ENCODE measurements at regions of chr1 and their contacts with region 1.

Region 1: DNA sequence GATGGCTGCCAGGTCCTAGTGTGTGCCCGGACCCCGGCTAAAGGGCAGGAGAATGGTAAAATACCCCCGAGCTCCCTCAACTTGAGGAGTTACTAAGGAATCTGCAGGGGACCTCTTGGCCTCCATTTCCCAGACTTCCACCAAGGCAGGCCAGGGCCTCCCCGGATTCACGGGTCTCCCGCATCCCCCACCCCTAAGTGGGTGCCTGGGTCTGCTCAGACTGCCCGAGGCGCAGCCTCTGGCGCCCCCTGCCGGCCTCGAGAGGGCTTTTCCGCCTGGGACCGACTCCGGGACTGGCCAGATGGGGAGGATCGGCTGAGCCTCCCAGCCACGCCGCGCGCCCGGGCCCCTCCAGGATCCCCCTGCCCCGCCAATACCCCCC is 1.7 kb downstream of the PLEKHG5 start:
- DNase-seq: peak; percentile 91 to 97 (median 96)
- ATAC-seq: peak; percentile 91
- H3K4me3 ChIP-seq: peak overlapping the region; percentile 40
- H3K27ac ChIP-seq: no peak overlapping the region
- H3K4me1 ChIP-seq: peaks cover 4 to 43% of the 10 kb centered on the region in 2 experiments; a peak in 2 of 5 replicates
- H3K27me3 ChIP-seq: peaks cover 18 to 70% of the 10 kb centered on the region in 2 experiments; a peak in 4 of 5 replicates
- CTCF ChIP-seq: peak; percentile 95 to 97 (median 97)
- EP300 ChIP-seq: no peak
- POLR2A ChIP-seq: no peak
- RAD21 ChIP-seq: peak; percentile 27 to 73; a peak in 3 of 4 replicates

Region 2: DNA sequence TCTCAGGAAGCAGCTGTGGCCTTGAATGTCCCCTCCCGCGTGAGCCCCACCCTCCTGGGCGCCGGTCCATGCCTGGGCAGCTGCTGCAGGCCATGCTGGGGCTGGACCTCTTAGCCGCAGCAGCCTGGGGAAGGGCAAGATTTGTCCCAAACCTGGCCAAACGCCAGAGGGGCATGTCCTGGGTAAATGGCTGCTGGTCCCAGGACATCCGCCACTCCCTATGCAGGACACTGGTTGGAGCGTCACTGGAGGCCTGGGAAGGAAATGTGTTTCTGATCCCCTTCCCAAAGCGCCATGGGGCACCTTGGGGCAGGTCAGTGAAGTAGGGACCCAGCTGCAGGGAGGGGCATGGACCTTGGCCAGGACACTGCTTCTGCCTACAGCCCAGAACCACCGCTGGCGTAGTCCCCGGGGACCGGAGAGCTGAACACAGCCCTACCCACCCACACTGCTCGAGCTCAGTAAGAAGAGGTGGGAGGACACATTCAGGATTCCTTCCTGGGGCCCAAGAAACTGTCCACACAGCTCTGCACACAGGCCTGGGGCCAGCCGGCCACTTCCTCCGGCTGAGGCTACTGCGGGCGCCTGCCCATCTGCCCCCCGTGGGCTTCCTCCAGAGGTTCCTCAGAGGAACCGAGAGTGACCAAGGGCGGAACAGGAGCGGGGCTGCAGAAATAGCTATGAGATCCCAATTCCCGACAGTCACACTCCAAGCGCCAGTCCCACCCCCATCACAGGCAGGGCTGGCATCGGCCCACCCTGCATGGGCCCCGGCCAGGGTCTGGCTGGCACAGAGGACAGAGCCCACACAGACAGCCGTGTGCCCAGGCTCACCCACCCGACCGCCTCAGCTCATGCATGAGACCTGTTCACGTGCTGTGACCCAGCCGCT is 12.5 kb after region 1 on chr1:
- CTCF ChIA-PET with region 1: no interaction called
- POLR2A ChIA-PET with region 1: interaction called, 8 read pairs
- in situ Hi-C with region 1: no loop called
- intact Hi-C with region 1: loop called (anchors 2 kb)
- DNase-seq: no peak
- ATAC-seq: peak; percentile 2; the same call in 1 of the 3 replicates
- H3K4me3 ChIP-seq: no peak overlapping the region
- H3K27ac ChIP-seq: no peak overlapping the region
- H3K4me1 ChIP-seq: peaks cover 0 to 61% of the 10 kb centered on the region in 2 experiments; a peak in 2 of 5 replicates
- H3K27me3 ChIP-seq: peaks cover 74 to 90% of the 10 kb centered on the region in 2 experiments
- CTCF ChIP-seq: no peak
- EP300 ChIP-seq: no peak
- POLR2A ChIP-seq: no peak
- RAD21 ChIP-seq: no peak

Region 3: DNA sequence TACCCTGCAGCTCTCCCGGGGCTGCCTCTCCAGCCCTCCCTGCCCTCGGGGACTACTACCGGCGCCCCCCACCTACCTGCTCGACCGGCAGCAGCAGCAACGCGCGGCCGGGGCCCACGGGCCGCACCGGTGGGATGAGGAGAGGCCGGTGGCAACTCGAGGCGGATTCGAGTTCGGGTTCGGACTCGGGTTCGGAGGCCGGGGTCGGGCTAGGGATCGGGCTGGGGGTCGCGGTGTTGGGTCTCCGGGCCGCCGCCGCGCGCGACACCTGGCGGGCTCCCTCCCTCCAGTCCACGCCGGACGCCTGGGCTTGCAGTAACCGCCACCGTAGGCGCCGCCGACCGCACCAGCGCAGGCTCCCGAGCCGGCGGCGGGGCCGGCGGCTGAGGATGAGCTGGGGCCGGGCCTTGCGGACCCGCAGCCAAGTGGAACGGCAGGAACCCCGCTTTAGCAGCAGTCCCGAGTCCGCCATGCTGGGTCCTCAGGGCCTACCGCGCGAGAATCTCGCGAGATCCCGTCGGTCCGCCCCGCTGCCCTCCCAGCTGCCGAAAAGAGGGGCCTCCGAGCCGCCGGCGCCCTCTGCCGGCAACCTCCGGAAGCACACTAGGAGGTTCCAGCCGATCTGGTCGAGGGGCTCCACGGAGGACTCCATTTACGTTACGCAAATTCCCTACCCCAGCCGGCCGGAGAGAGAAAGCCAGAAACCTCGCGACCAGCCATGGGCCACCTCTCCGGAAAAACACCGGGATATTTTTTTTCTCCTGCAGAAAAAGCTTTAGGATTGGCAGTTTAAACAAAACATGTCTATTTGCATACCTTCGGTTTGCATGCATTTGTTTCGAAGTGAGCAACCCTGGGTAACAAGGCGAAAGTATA is 64.5 kb after region 1 on chr1 and contains the start of gene NOL9:
- CTCF ChIA-PET with region 1: interaction called, 4 read pairs
- POLR2A ChIA-PET with region 1: no interaction called
- in situ Hi-C with region 1: no loop called
- intact Hi-C with region 1: loop called (anchors 2 kb)
- DNase-seq: peak; percentile 98 to 99 (median 98)
- ATAC-seq: peak; percentile 98
- H3K4me3 ChIP-seq: peak within 1 kb of the TSS; percentile 99
- H3K27ac ChIP-seq: peak within 1 kb of the TSS; percentile 85
- H3K4me1 ChIP-seq: peaks cover 14 to 24% of the 10 kb centered on the region in 2 experiments; a peak in 4 of 5 replicates
- H3K27me3 ChIP-seq: no peaks in the 10 kb centered on the region
- CTCF ChIP-seq: peak; percentile 96 to 98 (median 98)
- EP300 ChIP-seq: peak; percentile 51
- POLR2A ChIP-seq: peak; percentile 91
- RAD21 ChIP-seq: peak; percentile 70 to 76
- polyA plus RNA-seq, gene NOL9: 5.6 to 10.1 TPM

Region 4: GRCh38 chr1:6646499-6647148 is 156.8 kb after region 1 on chr1:
- CTCF ChIA-PET with region 1: interaction called, 31 read pairs
- POLR2A ChIA-PET with region 1: no interaction called
- in situ Hi-C with region 1: no loop called
- intact Hi-C with region 1: loop called (anchors 1 kb)
- DNase-seq: peak; percentile 51 to 59 (median 56)
- ATAC-seq: peak; percentile 83
- H3K4me3 ChIP-seq: no peak overlapping the region
- H3K27ac ChIP-seq: no peak overlapping the region
- H3K4me1 ChIP-seq: no peaks in the 10 kb centered on the region; a peak in 1 of 5 replicates
- H3K27me3 ChIP-seq: no peaks in the 10 kb centered on the region
- CTCF ChIP-seq: peak; percentile 61 to 86 (median 68)
- EP300 ChIP-seq: no peak
- POLR2A ChIP-seq: no peak
- RAD21 ChIP-seq: peak; percentile 73 to 76

Measured in K562 (cell line).